Vagina (tissue), 2 donors: ENCODE measurements at regions of chr3 and their contacts with region 1.

Region 1: DNA sequence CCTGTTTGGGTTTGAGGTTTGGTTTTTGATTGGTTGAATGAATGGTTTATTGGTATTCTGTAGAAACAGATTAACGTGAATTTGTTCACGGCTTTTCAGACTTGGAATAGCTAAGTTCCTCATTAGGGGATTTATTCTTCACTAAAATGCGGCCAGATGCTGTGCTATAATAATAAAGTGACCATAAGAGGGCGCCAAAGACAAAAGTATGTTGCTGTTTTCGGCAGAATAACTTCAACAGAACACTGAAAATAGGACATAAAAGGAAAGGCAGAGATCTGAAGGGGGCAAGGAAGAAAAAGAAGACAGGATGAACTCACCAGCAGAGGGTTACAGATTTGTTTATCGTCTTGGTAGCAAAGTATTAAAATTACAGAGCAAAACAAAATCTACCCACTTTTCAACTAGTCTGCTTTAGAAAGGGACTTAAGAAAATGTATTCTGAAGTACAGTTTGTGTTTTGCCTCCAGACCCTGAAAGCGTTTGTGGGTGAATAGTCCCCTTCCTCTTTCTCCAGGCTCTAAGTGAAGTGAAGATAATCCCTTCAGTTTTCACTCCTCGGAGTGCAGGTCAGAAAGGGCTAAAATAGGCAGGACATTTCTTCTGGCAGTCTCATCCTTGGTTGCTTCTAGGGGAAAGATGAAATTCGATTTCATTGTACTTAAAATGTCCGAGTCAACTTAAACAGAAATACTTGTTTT is 147.6 kb downstream of the IL20RB start:
- DNase-seq: no peak
- H3K4me3 ChIP-seq: no peak overlapping the region
- H3K27ac ChIP-seq: no peak overlapping the region
- H3K4me1 ChIP-seq: no peaks in the 10 kb centered on the region
- H3K27me3 ChIP-seq: no peaks in the 10 kb centered on the region
- CTCF ChIP-seq: peak in 2 of 3 experiments; percentile 46 to 71
- POLR2A ChIP-seq: no peak

Region 2: DNA sequence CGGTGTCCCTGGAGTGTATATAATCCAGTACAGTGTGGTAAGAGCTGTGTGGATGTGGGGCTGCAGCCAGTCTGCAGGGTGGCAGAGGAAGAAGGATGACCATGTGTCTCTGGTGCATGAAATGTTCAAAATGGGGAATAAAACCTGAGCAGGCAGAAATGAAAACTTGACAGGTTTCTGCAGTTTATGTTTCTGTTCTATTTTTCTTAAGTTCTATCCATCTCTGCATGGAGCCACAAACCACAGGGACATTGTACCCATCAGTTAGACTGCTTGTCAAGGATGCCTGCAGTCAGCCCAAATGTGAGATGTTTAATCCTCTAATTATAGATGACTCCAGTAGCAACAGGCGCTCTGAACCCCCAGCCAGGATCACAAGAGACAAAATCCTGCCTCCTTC is 69.1 kb after region 1 on chr3:
- intact Hi-C with region 1: no loop called
- DNase-seq: no peak
- H3K4me3 ChIP-seq: no peak overlapping the region
- H3K27ac ChIP-seq: no peak overlapping the region
- H3K4me1 ChIP-seq: no peaks in the 10 kb centered on the region
- H3K27me3 ChIP-seq: no peaks in the 10 kb centered on the region
- CTCF ChIP-seq: no peak
- POLR2A ChIP-seq: no peak

Region 3: DNA sequence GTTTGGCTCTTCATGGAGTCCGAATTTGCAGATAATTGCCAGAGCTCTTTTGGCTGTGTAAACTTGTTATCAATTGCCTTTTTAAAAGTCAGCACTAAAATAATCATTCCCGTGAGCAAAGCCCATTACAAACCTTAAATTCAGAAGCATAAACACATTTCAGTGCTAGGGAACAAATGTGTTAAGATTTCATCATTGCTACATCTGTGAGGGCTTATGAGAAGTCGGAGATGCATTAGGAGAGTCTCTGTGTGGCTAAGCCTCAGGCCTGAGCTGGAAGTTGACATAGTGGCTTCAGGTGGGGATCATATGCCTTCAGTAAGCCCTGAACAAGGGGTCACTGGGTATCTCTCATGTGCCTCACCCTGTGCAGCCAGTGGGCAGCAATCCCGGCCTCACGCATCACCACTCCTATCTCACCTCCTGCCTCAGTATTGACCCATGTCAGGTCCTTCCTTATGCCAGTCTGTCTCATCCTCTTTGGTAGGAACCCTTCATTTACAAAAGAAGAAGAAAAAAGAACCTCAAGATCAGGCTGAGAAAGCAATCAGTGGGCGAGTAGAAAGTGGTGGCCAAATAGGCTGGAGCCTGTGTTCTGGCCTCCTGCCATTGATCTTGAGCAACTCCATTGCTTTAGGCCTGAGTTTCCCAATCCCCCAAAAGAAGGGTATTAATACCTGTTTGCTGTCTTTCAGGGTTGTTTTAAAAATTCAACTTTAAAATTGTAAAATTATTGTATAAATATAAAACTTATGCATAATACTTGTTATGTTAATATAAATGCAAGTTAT is 85.9 kb after region 1 on chr3:
- intact Hi-C with region 1: no loop called
- DNase-seq: no peak
- H3K4me3 ChIP-seq: no peak overlapping the region
- H3K27ac ChIP-seq: no peak overlapping the region
- H3K4me1 ChIP-seq: no peaks in the 10 kb centered on the region
- H3K27me3 ChIP-seq: no peaks in the 10 kb centered on the region
- CTCF ChIP-seq: no peak
- POLR2A ChIP-seq: no peak

Region 4: GRCh38 chr3:137946345-137946973 is 841.0 kb after region 1 on chr3:
- intact Hi-C with region 1: loop called (anchors 10 kb)
- DNase-seq: no peak
- H3K4me3 ChIP-seq: no peak overlapping the region
- H3K27ac ChIP-seq: no peak overlapping the region
- H3K4me1 ChIP-seq: no peaks in the 10 kb centered on the region
- H3K27me3 ChIP-seq: no peaks in the 10 kb centered on the region
- CTCF ChIP-seq: peak; percentile 22 to 49 (median 48)
- POLR2A ChIP-seq: no peak